Astrocyte of the cerebellum (primary cell): ENCODE measurements at regions of chr9 and their contacts with region 1.

Region 1: DNA sequence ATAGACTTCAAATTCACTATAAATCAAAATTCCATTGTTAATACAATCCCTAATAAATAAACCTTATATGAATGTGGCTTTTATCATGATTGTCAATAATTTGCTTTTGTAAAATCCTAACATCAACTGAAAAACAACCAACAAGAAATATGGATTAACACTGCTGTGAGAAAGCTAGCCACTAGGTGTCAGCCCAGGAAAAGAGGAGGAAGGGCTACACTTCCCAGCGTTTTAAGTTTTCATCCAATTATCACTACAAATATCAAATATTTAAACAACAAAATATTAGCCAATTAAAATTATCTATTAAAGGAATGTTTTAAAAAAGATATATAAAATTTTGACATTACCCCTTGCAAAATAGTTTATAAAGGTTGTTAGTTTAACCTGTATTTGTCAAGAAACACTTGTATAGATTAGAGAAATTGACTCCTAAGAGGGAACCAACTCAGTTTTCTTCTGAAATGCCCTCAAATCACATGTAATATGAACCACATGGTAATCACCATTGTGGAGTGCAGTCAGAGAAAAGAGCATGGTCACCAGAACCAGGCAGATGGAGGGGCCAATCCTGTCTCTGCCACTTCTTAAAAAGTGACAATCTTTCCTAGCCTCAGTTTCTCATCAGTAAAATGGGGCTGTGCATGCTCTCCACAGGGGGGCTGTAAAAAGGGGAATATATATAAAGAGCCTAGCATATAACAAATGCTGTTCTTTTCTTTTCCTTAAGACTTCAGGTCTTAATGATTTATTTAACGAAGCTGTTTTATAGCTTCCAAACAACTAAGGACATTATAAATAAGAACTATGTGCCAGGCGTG is 188.2 kb downstream of the CRB2 start:
- DNase-seq: peak; percentile 26
- H3K4me3 ChIP-seq: no peak overlapping the region
- CTCF ChIP-seq: peak; percentile 86

Region 2: GRCh38 chr9:123883634-123884033 is 339.4 kb after region 1 on chr9:
- in situ Hi-C with region 1: no loop called
- DNase-seq: no peak
- H3K4me3 ChIP-seq: no peak overlapping the region
- CTCF ChIP-seq: no peak

Region 3: GRCh38 chr9:123929870-123930831 is 385.9 kb after region 1 on chr9 and contains the start of gene DENND1A:
- in situ Hi-C with region 1: loop called (anchors 5 kb)
- DNase-seq: peak; percentile 68
- H3K4me3 ChIP-seq: peak within 1 kb of the TSS; percentile 64
- CTCF ChIP-seq: no peak